ENCODE measurements at regions of chr2 and their contacts with region 1.

Region 1: DNA sequence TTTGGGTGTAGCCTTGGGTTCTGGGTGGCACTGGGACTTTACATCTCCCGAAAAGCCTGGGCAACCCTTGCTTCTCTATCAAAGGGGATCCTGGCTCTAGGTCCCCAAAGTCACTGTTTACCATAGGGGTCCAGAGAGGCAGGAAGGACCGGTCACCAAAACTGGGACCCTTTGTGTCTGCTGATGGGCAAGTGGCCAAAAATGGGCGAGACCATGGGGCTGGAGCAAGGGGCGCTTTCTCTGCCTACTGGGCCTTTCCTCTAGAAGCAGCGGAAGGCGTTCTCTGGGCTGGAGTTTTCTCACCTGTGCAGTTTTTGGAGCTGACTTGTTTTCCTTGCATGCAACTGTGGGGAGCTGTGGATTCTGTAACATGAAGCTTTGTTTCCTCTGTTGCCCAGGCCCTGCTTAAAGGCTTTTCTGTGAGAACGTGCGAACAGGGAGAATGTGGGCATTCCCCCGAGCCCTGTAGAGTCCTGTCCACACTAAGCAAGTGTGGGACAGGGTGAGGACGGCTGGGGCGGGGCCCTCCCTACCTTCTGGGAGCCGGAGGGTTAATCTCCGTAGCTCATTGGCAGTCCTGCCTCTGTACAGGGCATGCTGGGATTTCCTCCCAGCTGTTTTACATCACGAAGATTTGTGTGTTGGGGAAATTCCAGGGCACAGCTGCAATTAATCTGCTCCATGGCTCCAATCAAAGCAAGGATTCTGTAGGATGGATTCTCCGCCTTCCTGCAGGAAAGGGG is 50.2 kb downstream of the TGOLN2 start:
- DNase-seq: no peak
- H3K4me3 ChIP-seq: no peak overlapping the region
- H3K27ac ChIP-seq: no peak overlapping the region
- H3K4me1 ChIP-seq: peaks cover 12% of the 10 kb centered on the region
- H3K27me3 ChIP-seq: no peaks in the 10 kb centered on the region
- CTCF ChIP-seq: no peak
- POLR2A ChIP-seq: no peak

Region 2: DNA sequence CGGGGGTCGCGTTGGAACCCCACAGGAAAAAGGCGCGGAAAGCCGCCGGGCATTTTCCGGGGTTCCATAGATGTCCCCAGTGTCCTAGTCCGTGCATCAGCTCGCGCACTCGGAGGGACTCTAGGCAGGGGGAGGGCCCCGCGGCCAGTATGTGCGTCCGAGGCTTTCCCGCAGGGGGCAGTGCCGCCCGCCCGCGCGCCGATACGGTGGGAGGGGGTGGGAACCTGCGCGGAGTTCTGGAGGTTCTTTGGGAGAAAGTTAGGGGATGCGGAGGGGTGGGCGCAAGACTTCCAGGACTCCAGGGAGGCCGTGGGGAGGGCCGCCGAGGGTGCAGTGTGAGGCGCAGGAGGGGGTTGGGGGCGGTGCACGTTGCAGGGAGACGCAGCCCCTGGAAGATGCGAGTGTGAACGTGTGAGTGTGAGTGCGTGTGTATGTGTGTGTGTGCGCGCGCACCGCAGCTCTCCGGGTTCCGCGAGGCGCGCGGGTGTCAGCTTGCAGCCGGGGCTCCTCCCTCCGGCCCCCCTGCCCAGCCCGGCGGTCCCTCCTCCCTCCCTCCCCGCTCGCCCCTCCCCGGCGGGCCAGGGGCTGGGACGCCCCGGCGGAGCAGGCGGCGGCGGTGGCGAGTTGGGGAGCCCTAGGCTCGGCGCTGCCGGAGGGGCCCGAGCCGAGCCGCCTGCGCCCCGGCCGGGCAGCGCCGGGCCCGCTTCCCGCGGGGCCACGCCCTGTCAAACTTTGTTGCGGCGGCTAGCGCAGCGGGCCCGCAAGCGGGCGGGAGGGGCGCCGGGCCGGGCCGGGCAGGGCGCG is 144.6 kb before region 1 on chr2 and contains the start of gene TCF7L1:
- intact Hi-C with region 1: loop called (anchors 5 kb)
- DNase-seq: peak; percentile 84
- H3K4me3 ChIP-seq: peak within 1 kb of the TSS; percentile 55 to 79
- H3K27ac ChIP-seq: peak within 1 kb of the TSS; percentile 77 to 86
- H3K4me1 ChIP-seq: peaks cover 13% of the 10 kb centered on the region
- H3K27me3 ChIP-seq: no peaks in the 10 kb centered on the region
- CTCF ChIP-seq: peak; percentile 54 to 75 (median 75)
- POLR2A ChIP-seq: no peak
- total RNA-seq, gene TCF7L1: 6.7 TPM